ENCODE measurements at regions of chr22 and their contacts with region 1.

Region 1: GRCh38 chr22:25202290-25202921 is 2.7 kb downstream of the CRYBB3 start:
- DNase-seq: peak; percentile 56
- H3K4me3 ChIP-seq: no peak overlapping the region
- H3K27ac ChIP-seq: no peak overlapping the region
- H3K4me1 ChIP-seq: no peaks in the 10 kb centered on the region
- H3K27me3 ChIP-seq: no peaks in the 10 kb centered on the region
- CTCF ChIP-seq: peak; percentile 89

Region 2: GRCh38 chr22:25134028-25134427 is 68.4 kb before region 1 on chr22:
- intact Hi-C with region 1: no loop called
- DNase-seq: peak; percentile 78
- H3K4me3 ChIP-seq: no peak overlapping the region
- H3K27ac ChIP-seq: peak overlapping the region; percentile 77
- H3K4me1 ChIP-seq: peaks cover 22% of the 10 kb centered on the region
- H3K27me3 ChIP-seq: no peaks in the 10 kb centered on the region
- CTCF ChIP-seq: no peak

Region 3: GRCh38 chr22:25334162-25334490 is 131.7 kb after region 1 on chr22:
- intact Hi-C with region 1: loop called (anchors 10 kb)
- DNase-seq: peak; percentile 71
- H3K4me3 ChIP-seq: no peak overlapping the region
- H3K27ac ChIP-seq: no peak overlapping the region
- H3K4me1 ChIP-seq: no peaks in the 10 kb centered on the region
- H3K27me3 ChIP-seq: no peaks in the 10 kb centered on the region
- CTCF ChIP-seq: peak; percentile 54